Activated CD4-positive, alpha-beta T cell treated with anti-CD3 and anti-CD28 coated beads for 36 hours (primary cell): ENCODE measurements at regions of chr17 and their contacts with region 1.

Region 1: DNA sequence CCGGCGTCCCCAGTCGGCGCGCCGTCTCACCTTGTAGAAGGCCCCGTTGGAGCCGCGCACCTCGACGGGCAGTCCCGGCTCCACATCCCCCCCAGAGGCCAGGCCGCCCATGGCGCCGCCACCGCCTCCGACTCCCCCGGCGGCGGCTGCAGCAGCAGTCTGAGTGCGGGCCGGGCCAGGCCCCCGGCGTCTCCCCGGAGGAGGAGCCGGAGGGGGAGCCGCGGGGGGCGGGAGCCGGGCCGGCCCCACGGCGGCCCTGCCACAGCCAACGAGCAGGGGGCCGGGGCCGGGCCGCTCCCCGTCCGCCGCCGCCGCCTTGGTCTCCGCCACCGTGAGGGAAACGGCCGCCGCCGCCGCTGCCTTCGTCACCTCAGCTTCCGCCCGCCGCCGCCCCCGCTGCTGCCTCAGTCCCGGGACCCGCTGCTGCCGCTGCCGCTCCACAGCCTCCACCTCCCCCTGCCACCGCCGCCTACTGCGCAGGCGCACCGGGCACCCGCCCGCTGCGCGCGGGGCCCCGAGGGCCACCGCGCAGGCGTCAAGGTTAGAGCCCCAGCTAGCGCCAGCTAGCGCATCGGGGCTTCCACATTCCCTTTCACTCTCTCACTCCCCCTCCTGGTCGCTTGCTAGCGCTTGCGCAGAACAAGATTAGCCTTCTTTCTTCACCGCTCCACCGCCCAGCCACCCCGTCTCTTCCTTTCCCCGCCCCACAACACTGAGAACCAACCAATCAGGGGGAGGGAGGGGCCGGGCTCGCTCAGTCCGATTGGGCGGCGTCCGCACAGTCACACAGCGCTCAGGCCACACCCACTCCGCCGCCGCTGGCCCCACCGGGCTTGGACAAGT is at the start of gene FXR2:
- DNase-seq: peak; percentile 100
- ATAC-seq: peak; percentile 95
- H3K4me3 Mint-ChIP-seq: peak within 1 kb of the TSS; percentile 85
- H3K27ac Mint-ChIP-seq: peak within 1 kb of the TSS; percentile 93
- H3K4me1 Mint-ChIP-seq: peaks cover 32% of the 10 kb centered on the region
- H3K27me3 Mint-ChIP-seq: no peaks in the 10 kb centered on the region
- total RNA-seq, gene FXR2: 35.6 to 50.2 TPM

Region 2: DNA sequence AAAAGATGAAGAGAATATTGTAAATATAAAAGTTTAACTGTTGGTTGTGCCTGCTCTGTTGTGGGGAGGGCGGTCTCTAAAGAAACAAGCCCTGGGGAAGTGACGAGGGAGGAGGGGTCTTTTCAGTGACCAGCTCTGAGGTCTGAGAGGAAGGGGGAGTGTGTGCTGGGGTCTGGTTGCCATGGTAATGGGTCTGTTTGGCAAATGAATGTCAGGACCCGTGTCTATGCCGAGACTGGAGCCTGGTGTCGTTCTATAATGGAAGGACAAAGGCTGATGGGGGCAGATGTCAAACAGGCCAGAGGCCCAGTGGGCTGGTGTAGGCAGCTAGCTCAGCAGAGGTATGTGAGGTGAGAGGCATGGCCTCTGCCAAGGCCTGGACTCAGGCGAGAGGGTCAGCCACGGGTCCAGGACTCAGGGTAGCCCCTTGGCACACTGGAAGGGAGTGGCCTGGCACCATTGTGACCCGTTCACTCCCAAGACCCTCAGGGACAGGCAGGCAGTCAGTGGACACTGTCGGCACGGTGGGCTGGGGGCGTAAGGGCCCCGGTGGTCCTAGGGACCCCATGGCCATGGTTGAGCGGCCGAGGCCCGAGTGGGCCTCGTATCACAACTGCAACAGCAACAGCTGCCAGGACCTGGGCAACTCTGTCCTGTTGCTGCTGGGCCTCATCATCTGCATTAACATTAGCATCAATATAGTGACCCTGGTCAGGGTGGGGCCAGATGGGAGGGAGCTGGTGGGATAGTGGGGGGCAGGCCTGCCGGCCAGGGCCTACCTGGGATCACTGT is 194.6 kb before region 1 on chr17 and contains the start of gene SPEM1:
- CTCF ChIA-PET with region 1: no interaction called
- POLR2A ChIA-PET with region 1: no interaction called
- intact Hi-C with region 1: no loop called
- DNase-seq: no peak
- ATAC-seq: no peak
- H3K4me3 Mint-ChIP-seq: no peak within 1 kb of the TSS
- H3K27ac Mint-ChIP-seq: no peak within 1 kb of the TSS
- H3K4me1 Mint-ChIP-seq: no peaks in the 10 kb centered on the region
- H3K27me3 Mint-ChIP-seq: no peaks in the 10 kb centered on the region
- total RNA-seq, gene SPEM1: not detected

Region 3: DNA sequence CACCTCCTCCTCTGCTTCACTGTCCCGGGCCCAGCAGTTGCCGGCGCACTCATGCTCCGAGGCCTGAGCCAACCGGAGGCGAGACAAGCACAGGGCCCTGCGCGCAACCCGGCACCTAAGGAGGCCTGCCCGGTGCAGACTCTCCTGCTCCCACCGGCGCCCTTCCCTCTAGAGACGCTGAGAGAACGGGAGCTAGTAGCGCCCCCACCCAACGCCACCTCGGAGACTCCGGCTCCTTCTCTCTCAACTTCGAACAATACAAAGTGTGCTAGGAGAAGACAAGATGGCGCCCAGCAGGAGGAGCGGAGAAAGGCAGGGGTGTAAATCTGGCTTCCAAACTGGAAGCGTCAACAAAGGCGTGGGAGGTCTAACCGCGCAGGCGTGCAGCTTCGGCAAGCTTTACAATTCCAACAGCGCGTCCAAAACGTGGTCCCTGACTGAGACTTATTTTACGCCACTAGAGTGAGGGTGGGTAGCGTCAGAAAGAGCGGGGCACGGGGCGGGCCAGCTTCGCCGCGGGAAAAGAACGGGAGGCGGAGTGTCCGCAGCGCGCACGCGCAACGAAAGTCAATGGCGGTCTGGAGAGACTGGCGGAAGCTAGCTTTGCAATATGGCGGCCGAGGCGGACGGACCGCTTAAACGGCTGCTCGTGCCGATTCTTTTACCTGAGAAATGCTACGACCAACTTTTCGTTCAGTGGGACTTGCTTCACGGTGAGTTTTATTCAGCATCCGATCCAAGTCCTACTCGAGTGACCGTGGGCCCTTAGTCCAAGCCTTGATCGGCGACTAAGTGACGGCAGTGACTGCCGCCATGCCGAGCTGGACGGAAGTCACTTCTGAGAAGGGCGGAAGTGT is 31.2 kb before region 1 on chr17 and contains the start of gene MPDU1:
- CTCF ChIA-PET with region 1: interaction called, 10 read pairs
- POLR2A ChIA-PET with region 1: interaction called, 30 read pairs
- intact Hi-C with region 1: loop called (anchors 1 to 2 kb)
- DNase-seq: peak; percentile 98
- ATAC-seq: peak; percentile 77
- H3K4me3 Mint-ChIP-seq: peak within 1 kb of the TSS; percentile 82
- H3K27ac Mint-ChIP-seq: peak within 1 kb of the TSS; percentile 100
- H3K4me1 Mint-ChIP-seq: peaks cover 56% of the 10 kb centered on the region
- H3K27me3 Mint-ChIP-seq: no peaks in the 10 kb centered on the region
- total RNA-seq, gene MPDU1: 51.7 to 77.0 TPM